ENCODE measurements at regions of chr14 and their contacts with region 1.

Region 1: GRCh38 chr14:34629657-34630529 is at the start of gene SNX6:
- DNase-seq: peak; percentile 70
- ATAC-seq: peak; percentile 99
- H3K4me3 ChIP-seq: peak within 1 kb of the TSS; percentile 92
- H3K27ac ChIP-seq: peak within 1 kb of the TSS; percentile 94
- H3K4me1 ChIP-seq: no peaks in the 10 kb centered on the region
- H3K27me3 ChIP-seq: no peaks in the 10 kb centered on the region
- CTCF ChIP-seq: no peak
- POLR2A ChIP-seq: peak; percentile 65
- RAD21 ChIP-seq: no peak
- total RNA-seq, gene SNX6: 116 and 166 TPM in 2 replicates

Region 2: GRCh38 chr14:34539407-34540180 is 90.3 kb before region 1 on chr14 and contains the start of gene EAPP:
- CTCF ChIA-PET with region 1: no interaction called
- POLR2A ChIA-PET with region 1: no interaction called
- dilution Hi-C with region 1: no loop called
- in situ Hi-C with region 1: no loop called
- intact Hi-C with region 1: no loop called
- DNase-seq: peak; percentile 97
- ATAC-seq: peak; percentile 99
- H3K4me3 ChIP-seq: peak within 1 kb of the TSS; percentile 80
- H3K27ac ChIP-seq: peak within 1 kb of the TSS; percentile 94
- H3K4me1 ChIP-seq: peaks cover 5% of the 10 kb centered on the region
- H3K27me3 ChIP-seq: no peaks in the 10 kb centered on the region
- CTCF ChIP-seq: no peak
- POLR2A ChIP-seq: peak; percentile 94
- RAD21 ChIP-seq: peak; percentile 35
- total RNA-seq, gene EAPP: 32.3 and 53.6 TPM in 2 replicates

Region 3: DNA sequence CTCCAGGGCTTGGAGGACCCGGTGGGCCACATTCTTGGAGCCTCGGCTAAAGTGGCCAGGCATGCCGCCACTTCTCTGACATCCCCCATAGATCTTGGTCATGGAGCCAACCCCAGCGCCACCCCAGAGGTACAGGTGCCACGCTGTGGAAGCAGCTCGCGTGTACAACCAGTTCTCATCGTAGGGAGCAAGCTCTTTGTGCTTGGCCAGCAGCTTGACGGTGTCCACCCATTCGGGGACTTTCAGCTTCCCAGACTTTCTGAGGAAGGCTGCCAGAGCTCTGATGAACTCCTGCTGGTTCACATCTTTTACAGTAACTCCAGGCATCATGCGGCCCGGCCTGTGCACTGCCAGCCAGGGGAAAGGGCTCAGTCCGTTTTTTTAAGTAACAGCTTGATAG is 61.1 kb before region 1 on chr14:
- CTCF ChIA-PET with region 1: interaction called, 10 read pairs
- POLR2A ChIA-PET with region 1: no interaction called
- dilution Hi-C with region 1: no loop called
- in situ Hi-C with region 1: no loop called
- intact Hi-C with region 1: no loop called
- DNase-seq: no peak
- ATAC-seq: no peak
- H3K4me3 ChIP-seq: no peak overlapping the region
- H3K27ac ChIP-seq: no peak overlapping the region
- H3K4me1 ChIP-seq: no peaks in the 10 kb centered on the region
- H3K27me3 ChIP-seq: no peaks in the 10 kb centered on the region
- CTCF ChIP-seq: no peak
- POLR2A ChIP-seq: no peak
- RAD21 ChIP-seq: no peak

Region 4: GRCh38 chr14:34713681-34714319 is 83.9 kb after region 1 on chr14:
- CTCF ChIA-PET with region 1: no interaction called
- POLR2A ChIA-PET with region 1: interaction called, 10 read pairs
- dilution Hi-C with region 1: no loop called
- in situ Hi-C with region 1: no loop called
- intact Hi-C with region 1: no loop called
- DNase-seq: peak; percentile 84
- ATAC-seq: peak; percentile 22
- H3K4me3 ChIP-seq: peak overlapping the region; percentile 77
- H3K27ac ChIP-seq: peak overlapping the region; percentile 97
- H3K4me1 ChIP-seq: peaks cover 6% of the 10 kb centered on the region
- H3K27me3 ChIP-seq: no peaks in the 10 kb centered on the region
- CTCF ChIP-seq: no peak
- POLR2A ChIP-seq: peak; percentile 64
- RAD21 ChIP-seq: no peak; the same call in 1 of the 2 replicates

Measured in IMR-90 (cell line).